A673 (cell line): ENCODE measurements at regions of chr13 and their contacts with region 1.

Region 1: GRCh38 chr13:102131246-102131645 is 270.6 kb downstream of the FGF14 start:
- DNase-seq: peak; percentile 89
- H3K4me3 ChIP-seq: no peak overlapping the region
- H3K27ac ChIP-seq: peak overlapping the region; percentile 66
- H3K4me1 ChIP-seq: peaks cover 54% of the 10 kb centered on the region
- H3K27me3 ChIP-seq: no peaks in the 10 kb centered on the region
- CTCF ChIP-seq: no peak

Region 2: DNA sequence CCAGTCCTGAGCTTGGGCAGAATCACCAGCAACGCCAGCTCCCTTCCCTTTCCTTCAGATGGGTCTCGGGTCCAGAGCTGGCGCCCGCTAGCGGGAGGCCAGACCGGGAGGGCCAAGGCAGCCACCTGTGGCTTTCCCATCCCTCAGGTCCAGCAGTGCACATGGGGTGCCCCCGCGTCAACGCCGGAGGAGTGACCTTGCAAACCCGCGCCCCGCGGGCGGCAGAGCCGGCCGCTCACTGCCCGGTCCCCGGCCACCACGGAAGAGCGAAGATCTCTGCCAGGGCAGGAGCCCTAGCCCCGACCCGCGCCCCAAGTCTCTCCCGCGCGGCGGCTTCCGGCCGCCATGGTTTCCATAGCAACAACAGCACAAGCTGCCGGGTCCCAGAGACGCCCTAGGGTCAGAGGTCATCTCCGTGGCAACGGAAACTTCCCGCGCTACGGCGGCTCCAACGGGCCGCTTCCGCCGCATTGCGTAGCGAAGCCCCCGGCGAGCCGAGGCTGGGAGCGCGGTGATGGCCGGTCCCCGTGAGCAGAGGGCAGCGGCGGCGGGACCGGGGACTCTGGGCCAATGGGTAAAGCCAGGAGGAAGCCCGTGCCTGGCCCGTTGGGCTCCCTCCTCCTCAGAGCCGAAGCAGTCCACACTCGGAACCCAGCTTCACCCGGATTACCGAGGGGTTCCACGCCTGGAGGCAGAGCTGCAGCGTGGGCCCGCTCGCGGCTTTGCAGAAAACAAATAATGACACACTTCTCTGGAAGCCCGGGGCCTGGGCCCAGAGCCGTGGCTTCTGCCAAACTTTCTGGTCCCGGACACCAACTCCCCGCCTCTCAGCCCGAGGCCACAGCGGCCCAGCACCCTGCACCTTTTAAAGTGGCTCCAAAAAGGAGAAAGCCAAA is 263.2 kb after region 1 on chr13:
- CTCF ChIA-PET with region 1: no interaction called
- POLR2A ChIA-PET with region 1: no interaction called
- intact Hi-C with region 1: loop called (anchors 5 kb)
- DNase-seq: peak; percentile 97
- H3K4me3 ChIP-seq: peak overlapping the region; percentile 73
- H3K27ac ChIP-seq: peak overlapping the region; percentile 98
- H3K4me1 ChIP-seq: peaks cover 65% of the 10 kb centered on the region
- H3K27me3 ChIP-seq: no peaks in the 10 kb centered on the region
- CTCF ChIP-seq: peak; percentile 53